K562 (cell line): ENCODE measurements at regions of chr14 and their contacts with region 1.

Region 1: GRCh38 chr14:61296719-61297502 is 15.8 kb upstream of the TMEM30B start:
- DNase-seq: peak in 2 of 4 experiments; percentile 12 to 39
- ATAC-seq: peak; percentile 62; the same call in 2 of the 3 replicates
- H3K4me3 ChIP-seq: no peak overlapping the region
- H3K27ac ChIP-seq: no peak overlapping the region
- H3K4me1 ChIP-seq: no peaks in the 10 kb centered on the region
- H3K27me3 ChIP-seq: no peaks in the 10 kb centered on the region
- CTCF ChIP-seq: peak; percentile 30 to 58 (median 32); a peak in 3 of 6 replicates
- EP300 ChIP-seq: no peak
- POLR2A ChIP-seq: no peak
- RAD21 ChIP-seq: peak; percentile 23 to 73; a peak in 2 of 4 replicates

Region 2: DNA sequence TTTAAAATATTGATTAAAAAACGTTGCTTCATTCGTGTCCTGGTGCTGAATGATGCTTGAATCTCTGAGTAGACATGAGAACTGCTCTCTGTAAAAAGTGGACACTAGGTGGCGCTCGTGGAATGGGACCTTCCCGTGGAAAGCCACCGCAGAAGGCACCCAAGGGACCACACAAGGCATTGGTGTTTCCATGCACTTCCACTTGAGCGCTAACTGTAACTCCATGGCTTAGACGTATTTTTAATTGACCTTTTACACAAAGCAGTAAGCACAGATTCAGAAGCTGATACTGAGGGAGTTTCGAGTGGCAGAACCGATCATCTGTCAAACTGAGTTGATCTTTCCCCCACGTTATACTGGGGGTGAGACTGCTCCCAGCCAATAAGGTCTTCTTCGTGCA is 159.8 kb after region 1 on chr14:
- CTCF ChIA-PET with region 1: no interaction called
- POLR2A ChIA-PET with region 1: no interaction called
- in situ Hi-C with region 1: no loop called
- intact Hi-C with region 1: loop called (anchors 1 kb)
- DNase-seq: peak; percentile 68 to 76 (median 72)
- ATAC-seq: peak; percentile 93
- H3K4me3 ChIP-seq: no peak overlapping the region
- H3K27ac ChIP-seq: no peak overlapping the region
- H3K4me1 ChIP-seq: peaks cover 0 to 10% of the 10 kb centered on the region in 2 experiments; a peak in 4 of 5 replicates
- H3K27me3 ChIP-seq: no peaks in the 10 kb centered on the region
- CTCF ChIP-seq: peak; percentile 69 to 72 (median 71)
- EP300 ChIP-seq: no peak
- POLR2A ChIP-seq: no peak
- RAD21 ChIP-seq: peak; percentile 63 to 73

Region 3: DNA sequence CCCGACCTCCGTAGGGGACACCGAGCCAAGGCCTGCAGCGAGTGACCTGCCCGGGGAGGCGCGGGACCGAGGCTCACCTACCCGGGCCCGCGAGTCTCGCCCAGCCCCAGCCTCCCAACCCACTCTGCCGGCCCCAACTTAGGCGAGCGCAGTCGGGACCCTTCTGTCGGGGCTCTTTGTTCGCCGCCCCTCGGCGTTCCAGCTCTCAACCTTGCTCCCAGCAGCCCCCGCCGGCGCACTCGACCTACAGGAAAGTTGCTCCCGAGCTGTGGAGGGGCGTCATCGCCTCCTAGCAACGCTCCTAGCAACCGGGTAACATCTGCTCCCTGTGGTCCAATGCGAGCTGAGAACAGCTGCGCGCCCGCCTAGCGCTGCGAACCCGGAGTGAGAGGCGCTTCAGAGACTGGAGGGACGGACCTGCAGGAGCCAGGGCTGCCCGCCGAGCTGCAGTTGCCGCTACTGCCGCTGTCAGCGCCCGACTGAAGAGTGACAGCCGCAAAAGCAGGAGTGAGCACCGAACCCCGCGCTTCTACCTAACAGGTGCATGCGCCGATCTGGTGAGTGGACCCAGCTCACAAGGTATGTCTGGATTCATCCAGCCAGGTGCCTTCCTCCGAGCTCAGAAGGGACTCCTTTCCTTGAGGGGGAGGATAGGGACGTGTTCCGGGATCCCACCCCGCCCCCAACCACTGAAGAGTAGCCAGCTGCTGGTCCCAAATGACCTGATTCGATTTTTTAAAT is 820.3 kb after region 1 on chr14:
- CTCF ChIA-PET with region 1: no interaction called
- POLR2A ChIA-PET with region 1: no interaction called
- in situ Hi-C with region 1: loop called (anchors 25 kb)
- intact Hi-C with region 1: no loop called
- DNase-seq: peak in 1 of 4 experiments; percentile 2
- ATAC-seq: peak; percentile 74
- H3K4me3 ChIP-seq: no peak overlapping the region
- H3K27ac ChIP-seq: no peak overlapping the region
- H3K4me1 ChIP-seq: no peaks in the 10 kb centered on the region; a peak in 1 of 5 replicates
- H3K27me3 ChIP-seq: peaks cover 0 to 16% of the 10 kb centered on the region in 2 experiments; a peak in 4 of 5 replicates
- CTCF ChIP-seq: no peak
- EP300 ChIP-seq: no peak
- POLR2A ChIP-seq: no peak
- RAD21 ChIP-seq: no peak